Esophagus squamous epithelium (tissue), 5 donors: ENCODE measurements at regions of chr15 and their contacts with region 1.

Region 1: DNA sequence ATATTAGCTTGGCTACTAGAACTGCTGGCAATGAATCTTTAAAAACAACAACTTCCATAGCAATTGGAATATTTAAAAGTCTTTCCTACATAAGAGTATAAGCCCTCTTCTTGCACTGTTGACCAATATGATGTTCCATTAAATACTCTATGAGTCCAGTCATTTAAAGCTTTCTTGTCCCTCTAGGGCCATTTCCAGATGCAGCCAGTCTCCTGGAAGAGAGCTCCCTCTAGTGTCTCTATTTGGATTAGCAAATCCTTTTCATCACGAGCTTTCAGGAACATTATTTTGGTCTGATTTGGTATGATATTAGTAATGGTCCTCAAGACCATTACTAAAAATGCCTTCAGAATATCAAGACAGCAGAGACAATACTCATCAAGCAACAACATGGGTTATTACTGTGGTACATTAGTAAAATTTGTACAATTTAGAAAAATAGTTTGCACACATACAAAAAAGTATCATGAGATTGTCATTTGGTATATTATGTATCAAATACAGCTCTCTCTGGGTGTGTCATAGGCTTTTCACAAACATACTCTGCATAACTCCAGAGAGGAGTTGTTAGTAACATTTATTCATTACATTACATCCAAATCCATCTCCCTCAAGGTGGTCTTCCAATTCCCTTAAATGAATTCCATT is 101.3 kb downstream of the DPH6 start:
- DNase-seq: no peak
- H3K4me3 ChIP-seq: no peak overlapping the region
- H3K27ac ChIP-seq: no peak overlapping the region
- H3K4me1 ChIP-seq: no peaks in the 10 kb centered on the region
- H3K27me3 ChIP-seq: no peaks in the 10 kb centered on the region
- CTCF ChIP-seq: peak in 5 of 6 experiments; percentile 43 to 70 (median 66)
- POLR2A ChIP-seq: no peak

Region 2: GRCh38 chr15:35293353-35294130 is 151.1 kb before region 1 on chr15:
- intact Hi-C with region 1: loop called (anchors 10 kb)
- DNase-seq: no peak
- H3K4me3 ChIP-seq: no peak overlapping the region
- H3K27ac ChIP-seq: no peak overlapping the region
- H3K4me1 ChIP-seq: peaks cover 0 to 12% (median 0%) of the 10 kb centered on the region in 3 donors
- H3K27me3 ChIP-seq: no peaks in the 10 kb centered on the region
- CTCF ChIP-seq: peak in 1 of 6 experiments; percentile 22
- POLR2A ChIP-seq: no peak

Region 3: GRCh38 chr15:35383511-35383910 is 61.2 kb before region 1 on chr15:
- intact Hi-C with region 1: no loop called
- DNase-seq: no peak
- H3K4me3 ChIP-seq: no peak overlapping the region
- H3K27ac ChIP-seq: no peak overlapping the region
- H3K4me1 ChIP-seq: no peaks in the 10 kb centered on the region
- H3K27me3 ChIP-seq: no peaks in the 10 kb centered on the region
- CTCF ChIP-seq: no peak
- POLR2A ChIP-seq: no peak